Sigmoid colon (tissue), 7 donors: ENCODE measurements at regions of chr2 and their contacts with region 1.

Region 1: GRCh38 chr2:163735685-163736432 is at the start of gene FIGN:
- DNase-seq: peak; percentile 89
- H3K4me3 ChIP-seq: peak within 1 kb of the TSS; percentile 57 to 87 (median 76)
- H3K27ac ChIP-seq: peak within 1 kb of the TSS; percentile 91 to 96 (median 92)
- H3K4me1 ChIP-seq: peaks cover 0 to 25% (median 6%) of the 10 kb centered on the region in 4 donors
- H3K27me3 ChIP-seq: no peaks in the 10 kb centered on the region
- CTCF ChIP-seq: no peak
- EP300 ChIP-seq: no peak
- POLR2A ChIP-seq: peak; percentile 68 to 73
- total RNA-seq, gene FIGN: 2.9 to 8.0 (median 5.9) TPM

Region 2: GRCh38 chr2:163345908-163346573 is 389.8 kb before region 1 on chr2:
- intact Hi-C with region 1: loop called (anchors 5 kb)
- DNase-seq: no peak
- H3K4me3 ChIP-seq: no peak overlapping the region
- H3K27ac ChIP-seq: no peak overlapping the region
- H3K4me1 ChIP-seq: peaks cover 0 to 13% (median 7%) of the 10 kb centered on the region in 4 donors
- H3K27me3 ChIP-seq: no peaks in the 10 kb centered on the region
- CTCF ChIP-seq: peak in 3 of 4 experiments; percentile 56 to 77 (median 74)
- EP300 ChIP-seq: no peak
- POLR2A ChIP-seq: no peak

Region 3: GRCh38 chr2:163580769-163581168 is 155.1 kb before region 1 on chr2:
- intact Hi-C with region 1: no loop called
- DNase-seq: no peak
- H3K4me3 ChIP-seq: no peak overlapping the region
- H3K27ac ChIP-seq: no peak overlapping the region
- H3K4me1 ChIP-seq: no peaks in the 10 kb centered on the region
- H3K27me3 ChIP-seq: no peaks in the 10 kb centered on the region
- CTCF ChIP-seq: no peak
- EP300 ChIP-seq: no peak
- POLR2A ChIP-seq: no peak

Region 4: DNA sequence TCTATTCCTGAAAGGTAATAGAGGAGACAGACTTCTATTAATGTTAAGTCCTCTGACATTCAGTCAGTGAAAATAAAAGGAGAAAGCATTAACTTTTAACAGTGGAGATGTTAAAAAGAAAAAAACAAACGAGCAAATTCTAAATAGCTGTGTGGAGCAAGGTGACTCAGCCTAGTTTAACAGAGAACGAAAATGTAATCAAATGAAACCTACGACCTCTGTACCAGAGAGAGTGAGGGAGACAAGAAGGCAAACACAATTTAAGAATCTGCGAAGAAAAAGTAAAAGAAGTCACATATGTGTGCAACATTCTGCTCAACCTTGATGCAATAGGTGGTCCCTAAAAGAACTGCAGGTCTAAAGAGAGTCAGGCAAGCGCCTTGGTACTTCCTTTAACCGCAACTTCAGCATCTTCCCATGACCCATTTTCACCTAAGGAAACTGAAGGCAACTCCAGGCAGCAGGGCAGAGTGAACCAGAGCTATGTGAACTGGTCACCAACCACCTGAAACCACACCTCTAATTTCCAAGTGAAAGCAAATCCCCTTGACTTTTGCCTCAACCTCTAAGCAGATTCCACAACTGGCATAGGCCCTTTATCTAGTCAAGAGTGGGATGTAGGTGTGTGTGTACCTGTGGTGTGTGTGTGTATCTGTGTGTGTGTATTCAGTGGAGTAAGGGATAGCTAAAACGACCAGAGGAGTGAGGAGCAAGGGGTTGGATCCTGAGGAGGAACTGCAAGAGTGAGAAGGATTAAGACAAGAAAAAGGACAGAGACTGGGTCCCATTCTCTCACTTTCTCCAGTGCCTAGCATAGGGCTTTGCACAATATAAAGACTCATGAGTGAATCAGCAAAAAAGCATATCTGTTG is 43.0 kb before region 1 on chr2:
- intact Hi-C with region 1: loop called (anchors 5 kb)
- DNase-seq: no peak
- H3K4me3 ChIP-seq: no peak overlapping the region
- H3K27ac ChIP-seq: peak overlapping the region; percentile 43 to 69 (median 56)
- H3K4me1 ChIP-seq: peaks cover 0 to 28% (median 27%) of the 10 kb centered on the region in 4 donors
- H3K27me3 ChIP-seq: no peaks in the 10 kb centered on the region
- CTCF ChIP-seq: no peak
- EP300 ChIP-seq: no peak
- POLR2A ChIP-seq: no peak